A549 (cell line): ENCODE measurements at regions of chr16 and their contacts with region 1.

Region 1: DNA sequence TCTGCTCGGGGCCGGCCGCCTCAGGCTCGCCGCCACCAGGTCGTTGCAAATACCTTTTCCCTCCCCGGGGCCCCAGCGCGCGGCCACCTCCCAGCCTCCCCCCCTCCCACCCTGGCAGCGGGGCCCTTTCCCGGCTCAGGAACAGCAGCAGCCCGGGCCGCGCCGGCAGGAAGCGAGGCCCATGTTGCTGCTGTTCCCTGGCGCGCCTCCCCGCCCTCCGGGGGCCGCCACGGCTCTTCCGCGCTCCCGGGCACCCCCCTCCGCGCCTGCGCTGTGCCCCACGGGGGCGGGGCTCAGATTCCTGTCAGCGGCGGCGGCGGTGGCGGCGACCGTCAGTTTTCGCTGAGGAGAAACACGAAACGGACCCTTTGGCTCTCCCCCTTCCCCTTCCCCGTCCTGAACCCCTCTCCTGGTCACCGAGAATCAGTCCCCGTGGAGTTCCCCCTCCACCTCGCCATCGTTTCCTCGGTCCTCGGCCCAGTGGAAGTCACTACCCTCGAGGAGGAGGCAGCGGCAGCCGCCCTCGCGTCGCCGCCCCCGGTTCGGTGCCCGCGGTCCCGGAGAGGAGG is at the start of gene NFAT5:
- DNase-seq: peak; percentile 72 to 87
- ATAC-seq: peak; percentile 77 to 82
- H3K4me3 ChIP-seq: peak within 1 kb of the TSS; percentile 79
- H3K27ac ChIP-seq: peak within 1 kb of the TSS; percentile 97 to 99
- H3K4me1 ChIP-seq: peaks cover 50% of the 10 kb centered on the region
- CTCF ChIP-seq: no peak
- EP300 ChIP-seq: no peak
- POLR2A ChIP-seq: peak; percentile 60
- RAD21 ChIP-seq: peak; percentile 8 to 58; a peak in 4 of 5 replicates
- polyA plus RNA-seq, gene NFAT5: 45.1 and 48.3 TPM in 2 replicates

Region 2: GRCh38 chr16:69351309-69352027 is 214.3 kb before region 1 on chr16 and contains the start of gene TMED6:
- CTCF ChIA-PET with region 1: no interaction called
- POLR2A ChIA-PET with region 1: interaction called, 13 read pairs
- DNase-seq: no peak
- ATAC-seq: no peak
- H3K4me3 ChIP-seq: no peak within 1 kb of the TSS
- H3K27ac ChIP-seq: no peak within 1 kb of the TSS
- H3K4me1 ChIP-seq: no peaks in the 10 kb centered on the region
- CTCF ChIP-seq: no peak
- EP300 ChIP-seq: no peak
- POLR2A ChIP-seq: no peak
- RAD21 ChIP-seq: no peak
- polyA plus RNA-seq, gene TMED6: 0.12 TPM in 1 of 2 replicates, not detected in the other

Region 3: GRCh38 chr16:69482410-69482991 is 83.3 kb before region 1 on chr16:
- CTCF ChIA-PET with region 1: no interaction called
- POLR2A ChIA-PET with region 1: no interaction called
- DNase-seq: no peak
- ATAC-seq: peak in 1 of 2 experiments; percentile 38; a peak in 3 of 6 replicates
- H3K4me3 ChIP-seq: no peak overlapping the region
- H3K27ac ChIP-seq: peak overlapping the region in 1 of 2 experiments; percentile 68; a peak in 3 of 6 replicates
- H3K4me1 ChIP-seq: peaks cover 14% of the 10 kb centered on the region
- CTCF ChIP-seq: no peak
- EP300 ChIP-seq: no peak
- POLR2A ChIP-seq: no peak
- RAD21 ChIP-seq: no peak

Region 4: DNA sequence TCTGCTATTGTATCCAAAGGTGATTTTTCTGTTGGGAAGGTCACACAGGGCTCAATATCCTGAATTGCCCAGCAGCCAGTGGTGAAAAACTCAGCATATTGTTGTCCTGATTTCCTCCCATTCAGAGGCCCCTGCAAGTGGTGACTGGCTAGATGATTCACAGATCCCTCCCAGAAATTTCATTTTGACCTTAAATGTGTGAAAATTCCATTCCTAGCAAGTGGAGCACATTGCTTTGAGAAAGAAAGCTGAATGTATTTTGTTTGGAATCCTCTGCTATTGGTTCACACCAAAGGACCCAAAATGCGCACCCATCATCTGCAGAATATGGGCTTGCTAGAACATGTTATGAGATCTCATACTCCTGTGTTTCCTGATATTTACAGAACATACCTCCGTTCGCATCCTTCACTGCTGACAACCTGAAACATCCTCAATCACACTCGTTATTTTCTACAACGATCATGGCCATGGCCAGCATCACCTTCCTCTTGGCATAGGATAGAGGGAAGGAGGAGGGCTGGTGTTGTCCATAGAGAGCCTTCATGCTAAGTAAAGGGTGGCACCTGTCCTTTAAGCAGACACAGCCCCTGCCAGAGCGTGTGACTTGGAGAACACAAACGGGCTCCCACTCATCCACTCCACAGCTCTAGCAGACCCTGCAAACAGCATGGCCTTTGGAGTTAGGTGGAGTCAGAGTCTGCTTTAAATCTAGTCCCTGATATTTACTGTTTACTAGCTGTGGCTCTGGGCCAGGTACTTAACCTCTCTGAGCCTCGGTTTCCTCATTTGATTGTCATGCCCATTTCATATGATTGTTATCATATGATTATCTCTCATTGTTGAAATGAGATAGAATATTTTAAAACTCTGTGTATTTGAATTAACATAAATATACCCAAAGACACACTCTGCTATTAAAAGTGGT is 30.4 kb before region 1 on chr16:
- CTCF ChIA-PET with region 1: interaction called, 3 read pairs
- POLR2A ChIA-PET with region 1: interaction called, 36 read pairs
- DNase-seq: no peak
- ATAC-seq: no peak
- H3K4me3 ChIP-seq: no peak overlapping the region
- H3K27ac ChIP-seq: peak overlapping the region; percentile 85 to 97
- H3K4me1 ChIP-seq: peaks cover 63% of the 10 kb centered on the region
- CTCF ChIP-seq: no peak
- EP300 ChIP-seq: no peak
- POLR2A ChIP-seq: no peak
- RAD21 ChIP-seq: no peak

Region 5: DNA sequence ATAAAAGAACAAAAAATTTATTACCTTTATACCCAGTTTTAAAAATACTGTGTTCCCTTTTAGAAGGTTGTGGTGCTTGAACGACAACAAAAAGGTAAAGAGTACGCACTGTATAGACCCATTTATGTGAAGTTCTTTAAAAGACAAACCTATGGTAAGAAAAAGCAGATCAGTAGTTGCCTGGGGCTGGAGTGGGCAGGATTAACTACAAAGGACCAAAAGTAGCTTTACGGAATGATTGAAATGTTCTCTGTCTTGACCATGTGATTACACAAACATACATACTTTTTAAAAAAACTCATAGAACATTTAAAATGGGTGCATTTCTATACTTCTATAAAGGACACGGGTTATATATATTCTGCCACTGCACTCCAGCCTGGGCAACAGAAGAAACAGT is 11.7 kb after region 1 on chr16:
- CTCF ChIA-PET with region 1: interaction called, 12 read pairs
- POLR2A ChIA-PET with region 1: interaction called, 4 read pairs
- DNase-seq: no peak
- ATAC-seq: peak in 1 of 2 experiments; percentile 42; a peak in 3 of 6 replicates
- H3K4me3 ChIP-seq: no peak overlapping the region
- H3K27ac ChIP-seq: no peak overlapping the region
- H3K4me1 ChIP-seq: peaks cover 48% of the 10 kb centered on the region
- CTCF ChIP-seq: no peak
- EP300 ChIP-seq: no peak
- POLR2A ChIP-seq: no peak
- RAD21 ChIP-seq: no peak

Region 6: GRCh38 chr16:69595127-69596036 is 29.6 kb after region 1 on chr16:
- CTCF ChIA-PET with region 1: no interaction called
- POLR2A ChIA-PET with region 1: no interaction called
- DNase-seq: peak; percentile 28 to 37
- ATAC-seq: peak; percentile 82 to 86
- H3K4me3 ChIP-seq: peak overlapping the region; percentile 10; the same call in 2 of the 3 replicates
- H3K27ac ChIP-seq: peak overlapping the region; percentile 48 to 71
- H3K4me1 ChIP-seq: peaks cover 72% of the 10 kb centered on the region
- CTCF ChIP-seq: no peak
- EP300 ChIP-seq: no peak
- POLR2A ChIP-seq: no peak
- RAD21 ChIP-seq: no peak